ENCODE measurements at regions of chr7 and their contacts with region 1.

Region 1: DNA sequence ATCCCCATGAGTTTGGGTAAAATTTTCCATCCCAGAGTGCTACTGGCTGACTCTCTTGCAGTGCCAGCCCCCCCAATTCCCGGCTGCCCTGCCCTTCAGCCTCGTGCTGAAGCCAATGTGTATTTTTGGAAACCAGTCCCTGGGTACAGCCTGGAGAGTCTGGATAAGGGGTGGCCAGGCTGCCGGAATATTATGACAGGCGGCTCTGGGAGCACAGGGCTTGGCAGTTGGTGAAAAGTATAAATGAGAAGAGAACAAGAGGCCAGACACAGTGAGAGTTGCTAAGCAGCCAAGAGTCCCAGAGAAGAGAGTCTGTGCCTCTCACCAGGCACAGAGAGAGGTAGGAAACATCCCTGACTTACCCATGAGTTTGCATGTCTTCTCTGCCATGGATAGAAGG is 53.6 kb downstream of the TMEM130 start:
- DNase-seq: no peak
- H3K4me3 ChIP-seq: no peak overlapping the region
- H3K4me3 Mint-ChIP-seq: no peak overlapping the region
- H3K27ac Mint-ChIP-seq: no peak overlapping the region
- H3K4me1 ChIP-seq: peaks cover 19% of the 10 kb centered on the region
- H3K4me1 Mint-ChIP-seq: peaks cover 15% of the 10 kb centered on the region
- H3K27me3 ChIP-seq: no peaks in the 10 kb centered on the region
- H3K27me3 Mint-ChIP-seq: no peaks in the 10 kb centered on the region
- CTCF ChIP-seq: no peak

Region 2: GRCh38 chr7:98779800-98780587 is 36.2 kb before region 1 on chr7:
- CTCF ChIA-PET with region 1: interaction called, 3 read pairs
- POLR2A ChIA-PET with region 1: no interaction called
- intact Hi-C with region 1: loop called (anchors 2 kb)
- DNase-seq: no peak
- H3K4me3 ChIP-seq: no peak overlapping the region
- H3K4me3 Mint-ChIP-seq: no peak overlapping the region
- H3K27ac Mint-ChIP-seq: no peak overlapping the region
- H3K4me1 ChIP-seq: peaks cover 28% of the 10 kb centered on the region
- H3K4me1 Mint-ChIP-seq: peaks cover 19% of the 10 kb centered on the region
- H3K27me3 ChIP-seq: no peaks in the 10 kb centered on the region
- H3K27me3 Mint-ChIP-seq: no peaks in the 10 kb centered on the region
- CTCF ChIP-seq: no peak

Region 3: DNA sequence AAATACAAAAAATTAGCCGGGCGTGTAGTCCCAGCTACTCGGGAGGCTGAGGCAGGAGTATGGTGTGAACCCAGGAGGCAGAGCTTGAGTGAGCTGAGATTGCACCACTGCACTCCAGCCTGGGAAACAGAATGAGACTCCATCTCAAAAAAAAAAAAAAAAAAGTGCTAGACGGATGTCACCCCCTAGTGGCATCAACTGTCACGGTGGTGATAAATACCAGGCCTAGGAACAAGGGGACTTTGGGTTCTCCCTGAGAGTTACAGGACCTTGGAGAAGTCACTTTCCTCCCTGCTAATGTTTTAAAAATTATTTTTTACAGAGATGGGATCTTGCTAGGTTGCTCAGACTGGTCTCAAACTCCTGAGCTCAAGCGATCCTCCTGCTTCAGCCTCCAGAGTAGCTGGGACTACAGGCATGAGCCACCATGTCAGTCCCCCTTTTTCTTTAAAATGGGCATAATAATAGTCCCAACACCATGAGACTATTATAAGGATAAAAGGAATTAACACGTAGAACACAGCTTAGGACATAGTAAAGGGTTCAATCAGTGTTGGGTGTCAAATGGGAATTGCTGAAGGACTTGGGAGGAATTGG is 56.2 kb after region 1 on chr7:
- CTCF ChIA-PET with region 1: interaction called, 10 read pairs
- POLR2A ChIA-PET with region 1: no interaction called
- intact Hi-C with region 1: no loop called
- DNase-seq: peak in 1 of 2 experiments; percentile 49
- H3K4me3 ChIP-seq: no peak overlapping the region
- H3K4me3 Mint-ChIP-seq: no peak overlapping the region
- H3K27ac Mint-ChIP-seq: no peak overlapping the region
- H3K4me1 ChIP-seq: no peaks in the 10 kb centered on the region
- H3K4me1 Mint-ChIP-seq: no peaks in the 10 kb centered on the region
- H3K27me3 ChIP-seq: no peaks in the 10 kb centered on the region
- H3K27me3 Mint-ChIP-seq: no peaks in the 10 kb centered on the region
- CTCF ChIP-seq: peak; percentile 23 to 41

Region 4: DNA sequence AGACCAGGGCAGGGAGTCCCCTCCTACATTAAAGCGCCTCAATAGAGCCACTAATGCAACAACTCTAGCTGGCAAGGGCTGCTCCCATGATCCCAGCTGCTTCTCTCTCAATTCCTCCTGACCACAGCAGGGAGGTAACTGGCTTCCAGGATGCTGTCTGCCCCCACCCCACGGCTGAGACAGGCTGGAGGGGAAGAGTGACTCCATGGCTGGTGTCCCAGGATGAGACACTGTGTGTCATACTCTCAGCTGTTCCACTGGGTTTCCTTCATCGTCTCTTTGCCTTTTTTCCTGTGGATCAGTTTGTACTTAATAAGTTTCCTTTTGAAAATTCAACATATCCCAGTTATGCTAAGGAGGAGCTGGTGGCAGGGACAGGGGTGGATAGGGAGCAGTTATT is 428.7 kb after region 1 on chr7:
- CTCF ChIA-PET with region 1: no interaction called
- POLR2A ChIA-PET with region 1: no interaction called
- intact Hi-C with region 1: no loop called
- DNase-seq: no peak
- H3K4me3 ChIP-seq: no peak overlapping the region
- H3K4me3 Mint-ChIP-seq: no peak overlapping the region
- H3K27ac Mint-ChIP-seq: no peak overlapping the region
- H3K4me1 ChIP-seq: 0 out of 2 replicates have a peak, but pooled peaks cover 4% of the 10 kb centered on the region
- H3K4me1 Mint-ChIP-seq: no peaks in the 10 kb centered on the region
- H3K27me3 ChIP-seq: no peaks in the 10 kb centered on the region
- H3K27me3 Mint-ChIP-seq: no peaks in the 10 kb centered on the region
- CTCF ChIP-seq: no peak

Measured in Caco-2 (cell line).